ENCODE measurements at regions of chr20 and their contacts with region 1.

Region 1: GRCh38 chr20:24992487-24993205 is at the start of gene APMAP:
- DNase-seq: peak; percentile 98
- ATAC-seq: peak; percentile 98
- H3K4me3 ChIP-seq: peak within 1 kb of the TSS; percentile 95
- H3K27ac ChIP-seq: peak within 1 kb of the TSS; percentile 97
- H3K4me1 ChIP-seq: peaks cover 29% of the 10 kb centered on the region
- H3K27me3 ChIP-seq: no peaks in the 10 kb centered on the region
- CTCF ChIP-seq: no peak
- total RNA-seq, gene APMAP: 73.5 TPM

Region 2: GRCh38 chr20:24935766-24936525 is 56.7 kb before region 1 on chr20:
- intact Hi-C with region 1: no loop called
- DNase-seq: peak; percentile 34
- ATAC-seq: peak; percentile 20
- H3K4me3 ChIP-seq: no peak overlapping the region
- H3K27ac ChIP-seq: no peak overlapping the region
- H3K4me1 ChIP-seq: no peaks in the 10 kb centered on the region
- H3K27me3 ChIP-seq: no peaks in the 10 kb centered on the region
- CTCF ChIP-seq: no peak

Region 3: DNA sequence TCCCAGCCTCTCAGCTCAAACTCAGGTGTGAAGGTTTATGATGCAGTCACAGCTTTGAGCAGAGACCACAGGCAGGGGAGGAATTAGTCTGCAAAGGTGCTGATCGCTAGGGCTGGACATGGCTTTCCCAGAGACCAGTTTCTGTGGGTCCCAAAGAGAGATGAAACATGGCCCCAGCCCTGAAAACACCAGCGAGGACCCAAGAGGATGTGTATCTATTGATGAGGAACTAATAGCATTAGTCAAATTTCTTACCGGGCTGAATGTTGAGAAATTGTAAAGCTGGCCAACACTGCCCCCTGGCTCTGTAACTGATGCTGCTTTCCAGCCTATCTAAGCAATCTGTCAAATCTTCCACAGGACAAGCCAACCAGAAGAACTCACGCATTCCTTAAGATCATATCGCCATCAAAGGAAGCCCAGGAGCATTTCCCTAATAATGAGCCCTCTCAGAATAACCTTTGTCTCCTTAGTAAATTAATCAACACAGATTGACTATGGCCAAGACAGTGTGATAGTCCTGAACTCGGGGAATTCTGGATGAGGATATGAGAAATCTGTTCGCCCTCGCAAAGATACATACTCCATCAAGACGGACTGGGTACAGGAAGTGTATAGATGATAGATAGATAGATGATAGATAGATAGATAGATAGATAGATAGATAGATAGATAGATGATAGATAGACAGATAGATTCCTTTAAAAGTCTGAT is 73.1 kb after region 1 on chr20:
- intact Hi-C with region 1: loop called (anchors 5 kb)
- DNase-seq: peak; percentile 67
- ATAC-seq: peak; percentile 86
- H3K4me3 ChIP-seq: no peak overlapping the region
- H3K27ac ChIP-seq: no peak overlapping the region
- H3K4me1 ChIP-seq: no peaks in the 10 kb centered on the region
- H3K27me3 ChIP-seq: peaks cover 18% of the 10 kb centered on the region
- CTCF ChIP-seq: peak; percentile 84

Region 4: GRCh38 chr20:25178563-25179438 is 186.2 kb after region 1 on chr20:
- intact Hi-C with region 1: loop called (anchors 10 kb)
- DNase-seq: peak; percentile 74
- ATAC-seq: peak; percentile 93
- H3K4me3 ChIP-seq: no peak overlapping the region
- H3K27ac ChIP-seq: peak overlapping the region; percentile 49
- H3K4me1 ChIP-seq: no peaks in the 10 kb centered on the region
- H3K27me3 ChIP-seq: no peaks in the 10 kb centered on the region
- CTCF ChIP-seq: peak; percentile 70

Region 5: GRCh38 chr20:25390538-25391528 is 398.2 kb after region 1 on chr20 and contains the start of gene ABHD12:
- intact Hi-C with region 1: loop called (anchors 10 kb)
- DNase-seq: peak; percentile 99
- ATAC-seq: peak; percentile 98
- H3K4me3 ChIP-seq: peak within 1 kb of the TSS; percentile 91
- H3K27ac ChIP-seq: peak within 1 kb of the TSS; percentile 80
- H3K4me1 ChIP-seq: peaks cover 6% of the 10 kb centered on the region
- H3K27me3 ChIP-seq: no peaks in the 10 kb centered on the region
- CTCF ChIP-seq: no peak
- total RNA-seq, gene ABHD12: 45.2 TPM

Measured in upper lobe of right lung (tissue), 1 donor.